Endothelial cell of umbilical vein (primary cell): ENCODE measurements at regions of chr11 and their contacts with region 1.

Region 1: GRCh38 chr11:9534791-9535781 is 38.4 kb upstream of the WEE1 start:
- DNase-seq: peak; percentile 66
- H3K4me3 ChIP-seq: no peak overlapping the region
- H3K27ac ChIP-seq: no peak overlapping the region
- H3K4me1 ChIP-seq: no peaks in the 10 kb centered on the region
- H3K27me3 ChIP-seq: no peaks in the 10 kb centered on the region
- CTCF ChIP-seq: peak; percentile 83 to 90
- POLR2A ChIP-seq: no peak

Region 2: DNA sequence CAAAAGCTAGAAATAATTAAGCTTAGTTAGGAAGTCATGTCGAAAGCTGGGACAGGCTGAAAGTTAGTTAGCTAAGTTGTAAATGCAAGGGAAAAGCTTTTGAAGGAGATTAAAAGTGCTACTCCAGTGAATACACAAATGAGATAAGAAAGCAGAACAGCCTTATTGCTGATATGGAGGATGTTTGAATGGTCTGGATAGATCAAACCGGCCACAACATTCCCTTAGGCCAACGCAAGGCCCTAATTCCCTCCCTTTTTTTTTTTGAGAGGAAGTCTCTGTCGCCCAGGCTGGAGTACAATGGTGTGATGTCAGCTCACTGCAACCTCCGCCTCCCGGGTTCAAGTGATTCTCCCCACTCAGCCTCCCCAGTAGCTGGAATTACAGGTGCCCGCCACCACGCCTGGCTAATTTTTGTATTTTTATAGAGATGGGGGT is 15.1 kb after region 1 on chr11:
- CTCF ChIA-PET with region 1: interaction called, 16 read pairs
- POLR2A ChIA-PET with region 1: no interaction called
- dilution Hi-C with region 1: no loop called
- intact Hi-C with region 1: loop called (anchors 2 kb)
- DNase-seq: no peak
- H3K4me3 ChIP-seq: no peak overlapping the region
- H3K27ac ChIP-seq: no peak overlapping the region
- H3K4me1 ChIP-seq: peaks cover 5% of the 10 kb centered on the region
- H3K27me3 ChIP-seq: no peaks in the 10 kb centered on the region
- CTCF ChIP-seq: no peak
- POLR2A ChIP-seq: no peak

Region 3: GRCh38 chr11:9573052-9573774 is 38.1 kb after region 1 on chr11 and contains the start of gene WEE1:
- CTCF ChIA-PET with region 1: interaction called, 62 read pairs
- POLR2A ChIA-PET with region 1: no interaction called
- dilution Hi-C with region 1: no loop called
- intact Hi-C with region 1: loop called (anchors 2 kb)
- DNase-seq: peak; percentile 99
- H3K4me3 ChIP-seq: peak within 1 kb of the TSS; percentile 56 to 97 (median 63)
- H3K27ac ChIP-seq: peak within 1 kb of the TSS; percentile 83
- H3K4me1 ChIP-seq: peaks cover 34% of the 10 kb centered on the region
- H3K27me3 ChIP-seq: no peaks in the 10 kb centered on the region
- CTCF ChIP-seq: no peak
- POLR2A ChIP-seq: peak; percentile 50
- total RNA-seq, gene WEE1: 42.8 and 47.0 TPM in 2 replicates

Region 4: GRCh38 chr11:9601037-9601875 is 66.2 kb after region 1 on chr11:
- CTCF ChIA-PET with region 1: interaction called, 10 read pairs
- POLR2A ChIA-PET with region 1: no interaction called
- dilution Hi-C with region 1: no loop called
- intact Hi-C with region 1: no loop called
- DNase-seq: no peak
- H3K4me3 ChIP-seq: no peak overlapping the region
- H3K27ac ChIP-seq: no peak overlapping the region
- H3K4me1 ChIP-seq: peaks cover 3% of the 10 kb centered on the region
- H3K27me3 ChIP-seq: no peaks in the 10 kb centered on the region
- CTCF ChIP-seq: no peak
- POLR2A ChIP-seq: no peak